ENCODE measurements at regions of chr1 and their contacts with region 1.

Region 1: GRCh38 chr1:229003233-229004031 is 267.5 kb upstream of the RAB4A start:
- DNase-seq: peak; percentile 67 to 97 (median 88)
- H3K4me3 ChIP-seq: no peak overlapping the region
- H3K27ac ChIP-seq: peak overlapping the region; percentile 44 to 97 (median 90)
- H3K27me3 ChIP-seq: no peaks in the 10 kb centered on the region
- CTCF ChIP-seq: peak in 15 of 56 donors; percentile 5 to 42 (median 24)

Region 2: GRCh38 chr1:228837817-228838716 is 165.4 kb before region 1 on chr1:
- intact Hi-C with region 1: loop called (anchors 10 kb)
- DNase-seq: no peak
- H3K4me3 ChIP-seq: no peak overlapping the region
- H3K27ac ChIP-seq: peak overlapping the region in 58 of 59 donors; percentile 3 to 99 (median 93)
- H3K27me3 ChIP-seq: peaks cover 0 to 9% (median 0%) of the 10 kb centered on the region in 45 donors
- CTCF ChIP-seq: no peak

Region 3: GRCh38 chr1:228902781-228903433 is 100.5 kb before region 1 on chr1:
- intact Hi-C with region 1: loop called (anchors 2 to 5 kb)
- DNase-seq: peak; percentile 10 to 90 (median 76)
- H3K4me3 ChIP-seq: peak overlapping the region in 14 of 59 donors; percentile 4 to 31 (median 15)
- H3K27ac ChIP-seq: peak overlapping the region in 57 of 59 donors; percentile 12 to 93 (median 81)
- H3K27me3 ChIP-seq: no peaks in the 10 kb centered on the region
- CTCF ChIP-seq: peak in 7 of 56 donors; percentile 6 to 24 (median 13)

Region 4: GRCh38 chr1:228955691-228956090 is 47.7 kb before region 1 on chr1:
- intact Hi-C with region 1: loop called in 1 of 2 experiments (anchors 2 kb)
- DNase-seq: no peak
- H3K4me3 ChIP-seq: no peak overlapping the region
- H3K27ac ChIP-seq: peak overlapping the region in 1 of 59 donors; percentile 25
- H3K27me3 ChIP-seq: no peaks in the 10 kb centered on the region
- CTCF ChIP-seq: no peak

Region 5: GRCh38 chr1:229127301-229127700 is 123.9 kb after region 1 on chr1:
- intact Hi-C with region 1: loop called in 1 of 2 experiments (anchors 10 kb)
- DNase-seq: no peak
- H3K4me3 ChIP-seq: no peak overlapping the region
- H3K27ac ChIP-seq: peak overlapping the region in 50 of 59 donors; percentile 1 to 98 (median 68)
- H3K27me3 ChIP-seq: no peaks in the 10 kb centered on the region
- CTCF ChIP-seq: no peak

Region 6: GRCh38 chr1:229139331-229140118 is 136.1 kb after region 1 on chr1:
- intact Hi-C with region 1: loop called (anchors 5 to 10 kb)
- DNase-seq: no peak
- H3K4me3 ChIP-seq: no peak overlapping the region
- H3K27ac ChIP-seq: no peak overlapping the region
- H3K27me3 ChIP-seq: peaks cover 0 to 5% (median 0%) of the 10 kb centered on the region in 45 donors
- CTCF ChIP-seq: no peak

Region 7: GRCh38 chr1:229674042-229674441 is 670.6 kb after region 1 on chr1:
- intact Hi-C with region 1: no loop called
- DNase-seq: no peak
- H3K4me3 ChIP-seq: no peak overlapping the region
- H3K27ac ChIP-seq: no peak overlapping the region
- H3K27me3 ChIP-seq: no peaks in the 10 kb centered on the region
- CTCF ChIP-seq: no peak

Measured in dorsolateral prefrontal cortex (tissue), 120 donors.